ENCODE measurements at regions of chr11 and their contacts with region 1.

Region 1: DNA sequence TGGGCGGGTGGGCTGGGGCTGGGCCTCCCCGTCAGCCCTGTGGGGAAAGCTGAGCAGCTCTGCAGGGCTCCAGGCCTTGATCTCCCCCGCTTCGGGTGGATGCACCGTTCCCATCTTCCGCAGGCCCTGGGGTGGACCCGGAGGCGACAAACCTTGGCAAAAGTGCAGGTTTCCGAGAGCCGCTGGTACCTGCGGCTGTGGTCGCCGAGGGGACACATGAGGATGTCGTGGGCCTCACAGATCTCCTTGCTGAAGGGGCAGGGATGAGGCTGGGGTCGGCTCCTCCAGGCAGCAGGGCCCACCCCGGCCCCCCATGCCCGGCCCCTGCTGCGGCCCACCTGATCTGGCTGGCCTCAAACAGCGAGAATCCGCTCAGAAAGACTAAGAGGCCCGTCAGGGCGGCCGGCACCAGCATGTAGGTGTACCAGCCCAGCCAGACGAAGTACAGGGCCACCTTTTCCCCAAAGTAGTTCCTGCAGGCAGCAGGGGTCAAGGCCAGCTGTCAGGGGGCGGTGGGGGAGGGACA is 11.8 kb downstream of the ANO9 start:
- DNase-seq: no peak
- ATAC-seq: no peak

Region 2: GRCh38 chr11:655036-655726 is 225.2 kb after region 1 on chr11:
- intact Hi-C with region 1: no loop called
- DNase-seq: no peak
- ATAC-seq: no peak

Region 3: GRCh38 chr11:908273-908672 is 478.3 kb after region 1 on chr11:
- intact Hi-C with region 1: loop called (anchors 5 kb)
- DNase-seq: no peak
- ATAC-seq: no peak